ENCODE measurements at regions of chr10 and their contacts with region 1.

Region 1: GRCh38 chr10:14536241-14537213 is 205.8 kb upstream of the FRMD4A start:
- DNase-seq: peak; percentile 70
- H3K4me3 Mint-ChIP-seq: no peak overlapping the region
- H3K27ac Mint-ChIP-seq: no peak overlapping the region
- H3K4me1 Mint-ChIP-seq: peaks cover 83% of the 10 kb centered on the region
- H3K27me3 Mint-ChIP-seq: no peaks in the 10 kb centered on the region

Region 2: DNA sequence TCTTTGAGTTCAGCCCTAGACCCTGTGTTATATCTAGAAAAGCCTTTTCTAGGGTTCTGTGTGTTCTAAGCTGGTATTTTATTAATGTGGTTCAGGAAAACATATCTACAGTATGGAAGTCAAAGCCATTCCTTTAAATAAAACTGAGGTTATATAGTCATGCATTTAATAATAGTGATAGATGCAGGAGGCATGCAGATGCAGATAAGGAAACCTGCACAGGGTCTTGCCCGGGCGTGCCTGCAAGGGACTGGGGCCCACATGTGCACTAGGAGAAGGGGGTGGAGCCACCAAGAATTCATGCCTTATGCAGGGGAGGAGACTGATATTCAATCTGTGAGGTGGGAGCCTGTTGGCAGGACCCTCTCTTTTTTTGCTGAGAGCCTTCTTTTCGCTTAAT is 778.2 kb before region 1 on chr10:
- CTCF ChIA-PET with region 1: no interaction called
- intact Hi-C with region 1: no loop called
- DNase-seq: peak; percentile 25
- H3K4me3 Mint-ChIP-seq: no peak overlapping the region
- H3K27ac Mint-ChIP-seq: no peak overlapping the region
- H3K4me1 Mint-ChIP-seq: peaks cover 18% of the 10 kb centered on the region
- H3K27me3 Mint-ChIP-seq: peaks cover 2% of the 10 kb centered on the region

Region 3: GRCh38 chr10:14276210-14276609 is 260.3 kb before region 1 on chr10:
- CTCF ChIA-PET with region 1: no interaction called
- intact Hi-C with region 1: no loop called
- DNase-seq: no peak
- H3K4me3 Mint-ChIP-seq: no peak overlapping the region
- H3K27ac Mint-ChIP-seq: no peak overlapping the region
- H3K4me1 Mint-ChIP-seq: no peaks in the 10 kb centered on the region
- H3K27me3 Mint-ChIP-seq: no peaks in the 10 kb centered on the region

Region 4: DNA sequence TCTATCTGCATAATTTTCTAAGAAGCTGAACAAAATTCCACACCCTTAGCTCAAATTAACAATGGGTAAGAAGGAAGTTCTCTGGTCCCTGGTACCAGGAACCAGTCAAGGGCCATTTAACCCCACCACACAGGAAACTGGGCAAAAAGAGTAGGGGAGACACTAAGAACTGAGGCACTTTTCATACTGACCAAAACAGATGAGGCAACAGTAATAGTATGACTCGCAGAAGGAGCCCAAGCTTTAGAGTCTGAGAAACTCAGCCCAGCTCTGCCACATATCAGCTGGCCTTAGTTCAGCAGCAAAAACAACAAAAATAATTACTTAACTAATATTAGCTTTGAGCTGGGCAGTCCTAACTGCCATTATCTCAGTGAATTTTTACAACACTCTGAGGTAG is 16.9 kb after region 1 on chr10:
- CTCF ChIA-PET with region 1: interaction called, 15 read pairs
- intact Hi-C with region 1: no loop called
- DNase-seq: no peak
- H3K4me3 Mint-ChIP-seq: no peak overlapping the region
- H3K27ac Mint-ChIP-seq: peak overlapping the region; percentile 43
- H3K4me1 Mint-ChIP-seq: peaks cover 89% of the 10 kb centered on the region
- H3K27me3 Mint-ChIP-seq: no peaks in the 10 kb centered on the region

Region 5: DNA sequence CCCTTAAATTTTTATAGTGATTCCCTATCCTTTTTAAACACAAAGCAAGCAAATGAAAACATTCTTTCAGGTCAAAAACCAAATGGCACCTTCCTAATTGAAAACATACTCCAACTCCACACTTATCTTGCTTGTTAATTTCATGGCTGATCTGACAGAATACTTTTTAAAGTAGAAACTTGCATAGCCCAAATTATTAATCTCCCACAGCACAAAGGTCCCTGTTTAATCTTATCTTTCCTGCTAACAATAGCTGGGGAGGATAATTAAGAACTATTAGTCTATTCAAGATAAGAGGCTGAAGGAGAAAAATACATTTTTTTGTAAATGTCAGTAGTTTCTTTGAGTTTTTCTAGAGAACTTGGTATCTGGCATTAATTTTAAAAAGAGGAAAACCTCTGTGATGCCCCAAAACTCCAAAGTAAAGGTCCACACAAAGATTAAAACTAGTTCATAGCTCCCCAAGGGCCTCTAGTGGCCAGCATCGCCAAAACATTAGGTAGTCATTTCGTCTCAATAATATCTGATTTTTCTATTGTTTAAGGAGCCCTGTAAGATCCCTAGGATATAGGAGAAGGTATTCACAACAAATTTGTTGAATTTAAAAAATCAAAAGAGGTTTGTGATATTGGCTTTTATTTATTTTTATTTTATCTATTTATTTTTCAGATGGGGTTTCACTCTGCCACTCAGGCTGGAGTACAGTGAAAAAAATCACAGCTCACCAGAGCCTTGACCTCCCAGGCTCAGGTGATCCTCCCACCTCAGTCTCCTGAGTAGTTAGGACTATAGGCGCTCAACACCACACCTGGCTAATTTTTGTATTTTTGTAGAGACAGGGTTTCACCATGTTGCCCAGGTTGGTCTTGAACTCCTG is 286.6 kb after region 1 on chr10:
- CTCF ChIA-PET with region 1: interaction called, 15 read pairs
- intact Hi-C with region 1: loop called (anchors 2 kb)
- DNase-seq: peak; percentile 64
- H3K4me3 Mint-ChIP-seq: no peak overlapping the region
- H3K27ac Mint-ChIP-seq: no peak overlapping the region
- H3K4me1 Mint-ChIP-seq: peaks cover 3% of the 10 kb centered on the region
- H3K27me3 Mint-ChIP-seq: no peaks in the 10 kb centered on the region

Measured in activated naive CD4-positive, alpha-beta T cell treated with anti-CD3 and anti-CD28 coated beads for 36 hours (primary cell).